Right ventricle myocardium inferior (tissue), 1 donor: ENCODE measurements at regions of chr13 and their contacts with region 1.

Region 1: GRCh38 chr13:76009491-76009890 is 373.4 kb downstream of the LMO7 start:
- DNase-seq: no peak
- ATAC-seq: no peak

Region 2: GRCh38 chr13:75771818-75772217 is 237.7 kb before region 1 on chr13:
- intact Hi-C with region 1: no loop called
- DNase-seq: no peak
- ATAC-seq: no peak

Region 3: GRCh38 chr13:75902166-75903104 is 107.1 kb before region 1 on chr13:
- intact Hi-C with region 1: loop called (anchors 5 kb)
- DNase-seq: no peak
- ATAC-seq: peak; percentile 73

Region 4: DNA sequence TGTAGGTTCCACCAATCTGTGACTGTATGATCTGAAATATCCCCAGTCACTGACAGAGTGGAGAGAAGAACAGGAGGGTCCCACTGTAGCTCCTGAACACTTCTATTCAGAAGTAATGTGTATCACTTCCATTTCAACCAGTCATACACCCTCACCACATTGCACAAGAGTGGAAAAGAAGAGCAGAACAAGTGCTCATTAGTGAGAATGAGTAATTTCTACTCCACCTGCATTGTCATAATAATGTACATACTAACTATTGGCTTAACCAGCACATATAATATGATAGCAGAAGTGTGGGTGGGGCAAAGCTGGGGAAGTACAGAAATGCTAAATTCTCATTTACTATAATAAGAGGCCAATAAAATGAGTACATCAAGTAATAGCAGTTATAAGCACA is 30.7 kb before region 1 on chr13:
- intact Hi-C with region 1: no loop called
- DNase-seq: no peak
- ATAC-seq: no peak